H1 (cell line): ENCODE measurements at regions of chr18 and their contacts with region 1.

Region 1: GRCh38 chr18:45690975-45691815 is 32.8 kb upstream of the SLC14A1 start:
- DNase-seq: peak; percentile 46 to 90
- H3K4me3 ChIP-seq: no peak overlapping the region
- H3K27ac ChIP-seq: no peak overlapping the region
- H3K4me1 ChIP-seq: peaks cover 5 to 9% (median 7%) of the 10 kb centered on the region in 4 experiments
- H3K27me3 ChIP-seq: no peaks in the 10 kb centered on the region
- CTCF ChIP-seq: peak; percentile 81 to 96 (median 93)
- EP300 ChIP-seq: no peak
- POLR2A ChIP-seq: no peak
- RAD21 ChIP-seq: peak; percentile 98 to 99

Region 2: GRCh38 chr18:45526114-45526841 is 164.9 kb before region 1 on chr18:
- CTCF ChIA-PET with region 1: no interaction called
- POLR2A ChIA-PET with region 1: no interaction called
- DNase-seq: no peak
- H3K4me3 ChIP-seq: no peak overlapping the region
- H3K27ac ChIP-seq: no peak overlapping the region
- H3K4me1 ChIP-seq: no peaks in the 10 kb centered on the region
- H3K27me3 ChIP-seq: no peaks in the 10 kb centered on the region
- CTCF ChIP-seq: no peak
- EP300 ChIP-seq: no peak
- POLR2A ChIP-seq: no peak
- RAD21 ChIP-seq: peak; percentile 19 to 44; a peak in 1 of 4 replicates

Region 3: GRCh38 chr18:45702866-45703265 is 11.7 kb after region 1 on chr18:
- CTCF ChIA-PET with region 1: no interaction called
- POLR2A ChIA-PET with region 1: no interaction called
- DNase-seq: no peak
- H3K4me3 ChIP-seq: no peak overlapping the region
- H3K27ac ChIP-seq: no peak overlapping the region
- H3K4me1 ChIP-seq: no peaks in the 10 kb centered on the region
- H3K27me3 ChIP-seq: no peaks in the 10 kb centered on the region
- CTCF ChIP-seq: no peak
- EP300 ChIP-seq: no peak
- POLR2A ChIP-seq: no peak
- RAD21 ChIP-seq: no peak

Region 4: GRCh38 chr18:45850021-45850420 is 158.8 kb after region 1 on chr18:
- CTCF ChIA-PET with region 1: interaction called, 10 read pairs
- POLR2A ChIA-PET with region 1: no interaction called
- DNase-seq: peak in 1 of 2 experiments; percentile 56
- H3K4me3 ChIP-seq: no peak overlapping the region
- H3K27ac ChIP-seq: no peak overlapping the region
- H3K4me1 ChIP-seq: no peaks in the 10 kb centered on the region
- H3K27me3 ChIP-seq: no peaks in the 10 kb centered on the region
- CTCF ChIP-seq: peak; percentile 61 to 76 (median 75)
- EP300 ChIP-seq: no peak
- POLR2A ChIP-seq: no peak
- RAD21 ChIP-seq: peak; percentile 63 to 67

Region 5: DNA sequence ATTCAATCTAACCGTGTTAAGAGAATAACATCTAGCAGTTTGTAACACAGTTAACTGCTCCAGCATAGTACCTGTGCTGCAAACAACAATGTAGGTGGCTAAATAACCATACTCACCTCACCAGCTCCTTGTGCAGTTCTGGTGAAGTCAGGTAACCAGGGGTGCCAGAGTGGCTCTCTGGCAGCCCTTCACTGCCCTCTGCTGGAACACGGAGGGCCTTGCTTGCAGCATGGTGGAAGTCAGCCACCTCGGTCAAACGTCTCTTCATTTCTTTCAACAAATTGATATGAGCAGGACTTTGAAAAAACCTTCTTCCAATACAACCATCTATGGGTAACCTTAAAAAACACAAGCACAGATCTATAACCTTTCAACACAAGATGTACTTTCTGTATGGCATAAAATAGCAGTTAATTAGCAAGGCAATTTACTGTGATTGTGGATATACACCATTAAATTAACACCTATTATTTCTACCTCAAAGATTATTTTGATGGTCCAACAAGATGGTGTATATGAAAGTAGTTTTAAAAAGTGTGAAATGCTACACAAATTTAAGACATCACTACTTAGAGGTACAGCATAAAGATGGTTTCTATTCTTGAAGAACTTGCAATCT is 219.3 kb after region 1 on chr18:
- CTCF ChIA-PET with region 1: interaction called, 10 read pairs
- POLR2A ChIA-PET with region 1: interaction called, 3 read pairs
- DNase-seq: peak; percentile 33 to 72
- H3K4me3 ChIP-seq: no peak overlapping the region
- H3K27ac ChIP-seq: no peak overlapping the region
- H3K4me1 ChIP-seq: no peaks in the 10 kb centered on the region
- H3K27me3 ChIP-seq: no peaks in the 10 kb centered on the region
- CTCF ChIP-seq: peak; percentile 89
- EP300 ChIP-seq: no peak
- POLR2A ChIP-seq: no peak
- RAD21 ChIP-seq: peak; percentile 90 to 91